ENCODE measurements at regions of chr4 and their contacts with region 1.

Region 1: DNA sequence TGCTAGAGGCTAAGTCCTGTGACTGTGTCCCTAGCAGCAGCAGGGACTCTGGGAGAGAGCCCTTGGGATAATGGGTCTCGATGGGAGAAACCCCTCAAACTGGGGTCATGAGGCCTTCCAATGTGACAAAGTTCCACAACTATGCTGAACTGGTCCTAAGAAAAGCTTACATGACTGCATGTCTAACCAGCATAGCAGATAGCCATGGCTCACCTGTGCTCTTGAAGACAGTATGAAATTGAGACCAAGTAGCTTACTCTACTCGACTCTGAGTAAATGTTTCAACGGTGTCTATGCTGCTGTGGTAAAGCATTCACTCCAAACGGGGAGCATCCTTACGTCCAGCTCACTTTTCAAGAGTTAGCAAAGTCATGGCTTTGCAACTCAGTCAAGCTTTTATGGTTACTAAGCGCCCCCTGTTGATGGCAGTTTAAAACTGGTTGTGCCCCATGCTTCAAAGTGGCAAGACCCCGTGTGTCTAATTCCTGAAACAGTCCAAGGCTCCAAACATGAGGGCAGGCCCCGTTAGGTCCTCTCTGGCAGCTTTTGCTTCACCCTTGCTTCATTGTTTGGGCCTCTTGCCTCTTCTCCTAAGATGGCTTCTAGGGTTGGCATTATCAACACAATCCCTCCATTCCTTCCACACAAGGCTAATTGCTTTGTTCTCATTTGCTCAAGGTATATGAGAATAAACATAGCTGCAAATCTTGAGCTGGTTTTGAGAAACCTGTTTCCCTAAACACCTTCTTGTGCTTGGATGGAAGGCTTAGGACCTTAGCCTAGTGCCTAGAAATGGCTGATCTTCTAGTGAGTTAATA is 46.6 kb downstream of the CCNG2 start:
- DNase-seq: peak in 41 of 42 donors; percentile 15 to 89 (median 69)

Region 2: DNA sequence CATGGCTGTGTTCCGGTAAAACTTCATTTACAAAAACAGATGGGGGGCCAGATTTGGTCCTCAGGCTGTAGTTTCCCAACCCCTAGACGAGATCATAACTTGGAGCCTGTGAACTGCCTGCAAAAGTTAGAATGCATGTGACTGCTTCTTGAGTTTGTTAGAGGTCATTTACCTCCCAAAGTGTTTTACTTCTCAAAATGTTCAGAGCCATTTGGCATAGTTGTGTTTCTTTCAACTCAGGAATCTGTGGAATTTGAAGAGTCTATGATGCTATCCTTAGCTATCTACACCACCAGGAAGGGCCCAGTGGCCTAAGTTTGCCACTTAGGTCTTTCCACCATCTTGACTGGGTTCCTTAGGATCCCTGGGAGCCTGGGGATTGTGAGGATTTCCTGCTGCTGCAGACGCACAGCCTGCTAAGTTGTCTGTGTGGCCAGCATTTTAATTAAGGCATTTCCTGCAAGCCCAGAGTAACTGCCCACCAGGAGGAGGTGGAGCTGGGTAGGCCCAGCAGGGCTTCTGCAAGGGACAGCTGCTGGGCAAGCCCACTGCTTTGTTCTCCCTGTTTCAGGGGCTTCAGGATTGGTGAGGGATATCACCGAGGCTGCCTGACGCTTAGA is 180.9 kb before region 1 on chr4:
- intact Hi-C with region 1: no loop called
- DNase-seq: peak in 6 of 42 donors; percentile 11 to 38 (median 17)

Region 3: GRCh38 chr4:77095101-77095821 is 108.3 kb before region 1 on chr4:
- intact Hi-C with region 1: loop called (anchors 10 kb)
- DNase-seq: peak; percentile 65 to 93 (median 83)